Sciatic nerve (tissue), 2 donors: ENCODE measurements at regions of chr4 and their contacts with region 1.

Region 1: DNA sequence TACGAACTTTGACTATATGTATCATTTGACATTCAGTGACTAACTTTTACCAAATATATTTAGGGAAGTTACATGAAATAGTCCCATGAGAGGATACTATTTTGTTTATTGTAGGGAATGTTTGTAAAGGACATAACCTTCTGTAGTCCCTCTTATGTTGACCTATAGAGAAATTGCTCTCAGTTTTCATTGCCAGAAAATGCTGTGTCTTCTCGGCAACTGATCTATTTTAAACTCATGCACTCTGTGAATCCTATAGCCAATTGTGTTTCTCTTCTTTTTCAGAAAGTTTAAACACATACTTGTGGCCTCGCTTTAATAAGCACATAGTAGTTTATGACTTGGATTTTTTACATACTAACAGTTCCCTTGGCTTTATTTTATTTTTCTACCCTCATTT is 38.2 kb downstream of the DMP1 start:
- DNase-seq: no peak
- ATAC-seq: no peak

Region 2: GRCh38 chr4:87126000-87126399 is 562.3 kb before region 1 on chr4:
- intact Hi-C with region 1: loop called (anchors 5 kb)
- DNase-seq: no peak
- ATAC-seq: no peak

Region 3: GRCh38 chr4:87304671-87305432 is 383.5 kb before region 1 on chr4:
- intact Hi-C with region 1: no loop called
- DNase-seq: no peak
- ATAC-seq: no peak

Region 4: GRCh38 chr4:87633243-87633642 is 55.1 kb before region 1 on chr4:
- intact Hi-C with region 1: no loop called
- DNase-seq: no peak
- ATAC-seq: peak; percentile 65